Common myeloid progenitor, CD34-positive (primary cell): ENCODE measurements at regions of chr12 and their contacts with region 1.

Region 1: GRCh38 chr12:49049566-49050413 is 10.8 kb downstream of the KMT2D start:
- DNase-seq: no peak
- H3K4me3 ChIP-seq: no peak overlapping the region
- H3K27ac ChIP-seq: no peak overlapping the region
- H3K4me1 ChIP-seq: no peaks in the 10 kb centered on the region
- H3K27me3 ChIP-seq: no peaks in the 10 kb centered on the region

Region 2: GRCh38 chr12:49037111-49037946 is 12.5 kb before region 1 on chr12:
- CTCF ChIA-PET with region 1: interaction called, 121 read pairs
- POLR2A ChIA-PET with region 1: no interaction called
- DNase-seq: no peak
- H3K4me3 ChIP-seq: no peak overlapping the region
- H3K27ac ChIP-seq: no peak overlapping the region
- H3K4me1 ChIP-seq: no peaks in the 10 kb centered on the region
- H3K27me3 ChIP-seq: no peaks in the 10 kb centered on the region

Region 3: GRCh38 chr12:49088190-49088931 is 38.6 kb after region 1 on chr12:
- CTCF ChIA-PET with region 1: interaction called, 10 read pairs
- POLR2A ChIA-PET with region 1: no interaction called
- DNase-seq: peak; percentile 87 to 91 (median 90)
- H3K4me3 ChIP-seq: peak overlapping the region in 6 of 7 experiments; percentile 1 to 60 (median 35)
- H3K27ac ChIP-seq: no peak overlapping the region
- H3K4me1 ChIP-seq: peaks cover 11 to 51% (median 44%) of the 10 kb centered on the region in 4 experiments
- H3K27me3 ChIP-seq: peaks cover 13 to 50% (median 23%) of the 10 kb centered on the region in 5 experiments